ENCODE measurements at regions of chr4 and their contacts with region 1.

Region 1: DNA sequence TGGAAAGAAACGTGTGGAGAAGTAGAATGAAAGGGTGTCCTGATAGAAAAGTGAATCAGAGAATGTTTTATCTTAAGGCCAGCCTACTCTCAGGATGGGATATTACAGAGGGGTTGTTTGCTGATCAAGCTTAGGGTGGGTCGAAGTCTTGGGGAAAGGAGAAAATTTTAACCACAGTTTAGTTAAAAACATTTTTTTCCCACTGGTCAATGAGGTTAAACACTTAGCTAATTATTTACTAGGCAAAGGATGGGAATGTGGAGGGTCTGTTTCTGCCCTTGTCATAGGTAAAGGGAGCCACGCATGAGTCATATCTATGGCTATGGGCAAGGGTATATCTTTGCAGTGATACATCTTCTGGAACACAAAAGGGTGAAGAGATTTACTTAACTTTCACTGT is 16.1 kb upstream of the SULT1E1 start:
- DNase-seq: no peak
- H3K4me3 ChIP-seq: no peak overlapping the region
- H3K27ac ChIP-seq: no peak overlapping the region
- H3K4me1 ChIP-seq: no peaks in the 10 kb centered on the region
- H3K27me3 ChIP-seq: no peaks in the 10 kb centered on the region
- CTCF ChIP-seq: no peak
- POLR2A ChIP-seq: no peak

Region 2: DNA sequence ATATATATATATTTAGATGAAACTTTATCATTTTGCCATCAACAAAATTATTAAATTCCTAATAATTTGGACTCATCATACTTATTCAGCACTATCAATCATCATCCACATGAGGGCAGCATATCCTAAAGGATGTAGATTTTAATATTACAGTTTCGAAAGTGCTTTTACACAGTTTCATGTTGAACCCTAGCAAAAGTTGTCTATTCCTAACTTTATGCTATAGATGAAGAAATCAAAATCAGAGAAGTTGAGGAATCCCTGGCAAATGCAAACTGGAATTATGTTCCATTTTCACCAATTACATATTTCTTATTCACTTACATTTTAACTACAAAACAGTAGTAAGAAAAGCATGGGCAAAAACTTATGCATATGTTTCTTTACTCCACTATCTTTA is 186.5 kb before region 1 on chr4:
- intact Hi-C with region 1: loop called (anchors 5 kb)
- DNase-seq: peak; percentile 7
- H3K4me3 ChIP-seq: no peak overlapping the region
- H3K27ac ChIP-seq: no peak overlapping the region
- H3K4me1 ChIP-seq: no peaks in the 10 kb centered on the region
- H3K27me3 ChIP-seq: no peaks in the 10 kb centered on the region
- CTCF ChIP-seq: peak in 3 of 4 experiments; percentile 61 to 81 (median 72)
- POLR2A ChIP-seq: no peak

Region 3: DNA sequence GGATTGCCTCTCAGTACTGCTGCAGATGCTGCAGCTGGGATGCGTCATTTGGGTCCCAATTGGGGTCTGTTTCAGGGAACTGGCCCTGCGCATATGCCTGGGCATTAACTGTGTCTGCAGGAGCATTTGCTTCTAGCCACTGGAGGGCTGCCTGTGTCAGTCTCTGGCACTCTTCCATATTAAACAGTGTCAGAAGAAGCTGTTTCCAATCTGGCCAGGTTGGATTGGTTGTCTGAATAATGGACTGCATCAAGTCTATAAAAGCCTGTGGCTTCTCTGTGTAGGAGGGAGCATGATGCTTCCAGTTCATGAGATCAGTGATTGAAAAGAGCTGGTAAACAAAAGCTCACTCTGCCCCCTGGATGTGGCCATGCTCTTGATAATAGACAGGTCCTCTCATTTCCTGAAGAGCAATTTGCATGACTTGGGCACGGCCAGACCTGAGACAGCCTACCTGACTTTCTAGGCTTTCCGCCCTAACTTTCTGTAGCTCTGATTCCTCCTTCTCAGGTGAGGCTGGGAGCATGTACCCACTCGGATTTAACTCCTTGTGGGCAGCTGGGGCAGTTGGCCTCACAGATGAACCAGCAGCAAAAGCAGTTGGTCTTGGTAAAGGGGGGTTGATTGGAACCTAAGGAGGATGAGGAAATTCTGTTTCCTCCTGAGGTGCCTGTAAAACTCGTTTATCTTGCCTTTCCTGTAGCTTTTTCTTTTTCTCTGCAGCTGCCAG is 45.3 kb before region 1 on chr4:
- intact Hi-C with region 1: no loop called
- DNase-seq: peak; percentile 50
- H3K4me3 ChIP-seq: no peak overlapping the region
- H3K27ac ChIP-seq: no peak overlapping the region
- H3K4me1 ChIP-seq: peaks cover 5% of the 10 kb centered on the region
- H3K27me3 ChIP-seq: no peaks in the 10 kb centered on the region
- CTCF ChIP-seq: peak in 2 of 4 experiments; percentile 22 to 25
- POLR2A ChIP-seq: no peak

Region 4: DNA sequence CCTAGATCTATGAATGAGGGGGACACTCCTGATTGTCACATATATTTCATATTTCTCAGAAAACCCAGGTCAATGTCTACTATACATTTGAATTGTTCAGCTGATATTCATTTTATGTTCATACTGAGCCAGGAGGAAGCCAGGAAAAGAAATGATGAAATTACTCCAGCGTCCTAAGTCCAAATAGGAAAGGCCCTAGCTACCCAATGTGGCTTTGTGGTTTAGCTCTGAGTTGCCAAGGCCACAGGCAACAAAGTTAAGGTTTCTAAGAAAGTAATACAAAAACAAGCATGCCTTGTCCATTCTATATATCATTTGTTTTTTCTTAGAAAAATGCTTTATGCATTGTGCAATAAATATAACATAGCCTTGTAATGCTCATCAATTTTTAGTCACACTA is 94.0 kb after region 1 on chr4:
- intact Hi-C with region 1: no loop called
- DNase-seq: no peak
- H3K4me3 ChIP-seq: no peak overlapping the region
- H3K27ac ChIP-seq: no peak overlapping the region
- H3K4me1 ChIP-seq: no peaks in the 10 kb centered on the region
- H3K27me3 ChIP-seq: no peaks in the 10 kb centered on the region
- CTCF ChIP-seq: no peak
- POLR2A ChIP-seq: no peak

Measured in prostate gland (tissue), 2 donors.